ENCODE measurements at regions of chr22 and their contacts with region 1.

Region 1: GRCh38 chr22:19432133-19432851 is at the start of gene MRPL40:
- H3K4me3 ChIP-seq: peak within 1 kb of the TSS; percentile 90
- H3K27ac ChIP-seq: peak within 1 kb of the TSS; percentile 67
- H3K4me1 ChIP-seq: no peaks in the 10 kb centered on the region; the same call in 1 of the 2 replicates
- CTCF ChIP-seq: no peak; the same call in 1 of the 2 replicates

Region 2: DNA sequence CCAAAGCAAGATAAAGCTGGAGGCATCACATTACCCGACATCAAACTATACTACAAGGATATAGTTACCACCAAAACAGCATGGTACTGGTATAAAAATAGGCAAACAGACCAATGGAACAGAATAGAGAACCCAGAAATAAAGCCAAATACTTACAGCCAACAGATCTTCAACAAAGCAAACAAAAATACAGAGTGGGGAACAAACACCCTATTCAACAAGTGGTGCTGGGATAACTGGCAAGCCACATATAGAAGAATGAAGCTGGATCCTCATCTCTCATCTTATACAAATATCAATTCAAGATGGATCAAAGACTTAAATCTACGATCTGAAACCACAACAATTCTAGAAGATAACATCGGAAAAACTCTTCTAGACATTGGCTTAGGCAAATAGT is 90.8 kb before region 1 on chr22:
- CTCF ChIA-PET with region 1: no interaction called
- POLR2A ChIA-PET with region 1: no interaction called
- H3K4me3 ChIP-seq: no peak overlapping the region
- H3K27ac ChIP-seq: no peak overlapping the region
- H3K4me1 ChIP-seq: no peaks in the 10 kb centered on the region
- CTCF ChIP-seq: no peak

Region 3: DNA sequence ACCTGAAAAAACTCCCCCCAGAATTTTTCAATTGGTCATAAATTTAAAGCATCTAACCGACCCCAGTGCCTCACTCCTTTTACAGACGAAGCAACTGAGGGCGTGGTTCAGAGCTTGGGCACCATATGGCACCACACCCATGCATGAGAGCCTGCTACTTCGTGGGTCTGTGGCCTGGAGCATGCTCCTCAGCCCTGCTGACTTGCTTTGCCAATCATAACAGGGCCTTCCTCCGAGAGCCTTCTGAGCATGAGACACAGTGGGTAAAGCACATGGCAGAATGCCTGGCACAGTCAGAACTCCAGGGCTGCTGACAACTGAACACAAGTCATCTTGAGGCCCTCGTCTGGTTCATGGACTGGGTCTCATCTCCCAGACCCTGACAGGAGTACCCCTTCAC is 34.1 kb before region 1 on chr22:
- CTCF ChIA-PET with region 1: no interaction called
- POLR2A ChIA-PET with region 1: no interaction called
- H3K4me3 ChIP-seq: no peak overlapping the region
- H3K27ac ChIP-seq: no peak overlapping the region
- H3K4me1 ChIP-seq: no peaks in the 10 kb centered on the region
- CTCF ChIP-seq: no peak

Region 4: DNA sequence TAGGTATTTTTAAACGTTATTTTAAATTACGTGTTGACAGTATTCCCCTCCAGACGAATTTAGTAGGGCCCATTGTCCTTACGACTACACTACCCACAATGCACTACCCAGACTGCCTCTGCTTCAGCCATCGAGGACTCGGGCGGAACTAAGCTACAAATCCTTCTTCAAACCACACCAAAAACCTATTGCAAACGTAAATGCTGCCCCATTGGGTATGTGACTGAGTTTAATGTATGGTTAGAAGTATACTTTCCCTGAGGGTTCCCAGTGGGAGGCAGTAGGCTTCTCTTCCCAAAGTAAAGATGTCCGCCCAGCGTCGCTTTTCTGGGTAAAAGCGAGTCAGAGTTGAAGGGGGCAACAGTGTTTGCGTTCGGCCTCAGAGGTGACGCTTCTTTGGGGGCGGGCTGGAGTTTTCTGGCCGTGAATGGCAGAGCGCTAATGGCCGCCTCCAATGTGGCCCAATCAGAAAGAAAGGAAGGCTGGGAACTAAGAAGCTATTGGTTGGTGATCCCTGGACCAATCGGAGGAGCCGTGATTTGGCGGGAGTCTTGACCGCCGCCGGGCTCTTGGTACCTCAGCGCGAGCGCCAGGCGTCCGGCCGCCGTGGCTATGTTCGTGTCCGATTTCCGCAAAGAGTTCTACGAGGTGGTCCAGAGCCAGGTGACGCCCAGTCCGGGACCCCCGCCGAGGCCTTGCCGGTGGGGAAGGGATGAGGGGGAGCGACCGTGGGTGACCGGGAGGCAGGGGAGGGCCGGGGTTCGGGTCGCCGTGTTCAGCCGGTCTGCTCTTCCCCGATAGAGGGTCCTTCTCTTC is 47.3 kb after region 1 on chr22 and contains the start of gene CDC45:
- CTCF ChIA-PET with region 1: interaction called, 4 read pairs
- POLR2A ChIA-PET with region 1: interaction called, 15 read pairs
- H3K4me3 ChIP-seq: peak within 1 kb of the TSS; percentile 92
- H3K27ac ChIP-seq: peak within 1 kb of the TSS; percentile 86
- H3K4me1 ChIP-seq: no peaks in the 10 kb centered on the region
- CTCF ChIP-seq: no peak

Measured in HEK293 (cell line).